Motor neuron (in vitro differentiated cells): ENCODE measurements at regions of chr9 and their contacts with region 1.

Region 1: GRCh38 chr9:99819856-99820684 is 1.6 kb upstream of the NR4A3 start:
- ATAC-seq: peak; percentile 32 to 70 (median 62)
- H3K4me3 ChIP-seq: peak overlapping the region; percentile 56 to 91 (median 83)
- H3K27ac ChIP-seq: peak overlapping the region; percentile 94 to 97
- H3K4me1 ChIP-seq: peaks cover 6 to 8% of the 10 kb centered on the region in 2 donors

Region 2: DNA sequence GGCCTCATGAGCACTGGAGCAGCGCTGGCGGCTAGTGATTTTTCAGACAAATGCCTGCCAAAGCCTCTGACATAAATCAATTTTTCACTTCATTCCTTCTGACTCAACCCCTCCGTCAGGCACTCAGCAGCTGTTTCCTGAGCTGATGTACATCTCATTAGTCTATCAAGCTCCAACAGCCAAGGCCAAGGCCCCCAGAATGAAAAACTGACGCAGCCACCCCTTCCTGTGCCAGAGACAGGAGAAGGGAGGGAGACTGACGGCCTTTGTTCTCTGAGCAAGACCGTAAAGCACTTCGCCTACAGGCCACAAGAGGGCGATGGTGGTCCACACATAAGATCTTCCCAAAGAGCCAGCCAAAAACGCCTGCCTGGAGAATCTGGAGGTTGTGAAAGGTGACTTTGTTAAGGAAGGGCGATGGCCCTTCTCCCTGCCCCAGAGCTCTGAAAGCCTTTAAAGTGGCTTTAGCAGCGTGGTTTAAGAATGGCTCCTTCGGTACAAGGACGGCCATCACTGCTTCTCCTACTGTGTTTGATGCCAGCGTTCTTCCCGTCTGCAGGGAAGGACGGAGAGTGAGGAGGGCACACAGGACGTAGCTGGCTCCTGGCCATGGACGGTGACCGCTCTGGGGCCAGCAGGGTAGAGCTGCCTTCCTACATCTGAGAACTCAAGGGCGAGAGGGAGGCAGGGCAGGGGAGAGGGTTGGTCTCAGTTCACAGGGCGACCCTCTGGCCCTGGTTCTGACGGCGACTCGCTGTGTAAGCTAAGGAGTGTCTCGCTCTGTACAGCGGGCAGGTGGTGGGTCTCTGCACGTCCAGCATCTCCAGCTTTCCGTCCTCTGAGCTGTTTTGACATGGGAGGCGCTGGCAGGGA is 635.4 kb before region 1 on chr9:
- in situ Hi-C with region 1: loop called in 1 of 9 experiments (anchors 25 kb)
- ATAC-seq: peak; percentile 90 to 99 (median 96)
- H3K4me3 ChIP-seq: no peak overlapping the region
- H3K27ac ChIP-seq: peak overlapping the region; percentile 26 to 42
- H3K4me1 ChIP-seq: peaks cover 20 to 26% of the 10 kb centered on the region in 2 donors

Region 3: GRCh38 chr9:99266255-99267023 is 553.6 kb before region 1 on chr9:
- in situ Hi-C with region 1: loop called in 1 of 9 experiments (anchors 25 kb)
- ATAC-seq: peak; percentile 66 to 91 (median 77)
- H3K4me3 ChIP-seq: no peak overlapping the region
- H3K27ac ChIP-seq: no peak overlapping the region
- H3K4me1 ChIP-seq: no peaks in the 10 kb centered on the region

Region 4: GRCh38 chr9:99299211-99300102 is 520.6 kb before region 1 on chr9:
- in situ Hi-C with region 1: loop called in 1 of 9 experiments (anchors 25 kb)
- ATAC-seq: peak in 6 of 8 experiments; percentile 47 to 71 (median 62)
- H3K4me3 ChIP-seq: no peak overlapping the region
- H3K27ac ChIP-seq: no peak overlapping the region
- H3K4me1 ChIP-seq: peaks cover 3% of the 10 kb centered on the region in 2 donors